Activated naive CD4-positive, alpha-beta T cell treated with anti-CD3 and anti-CD28 coated beads for 36 hours (primary cell): ENCODE measurements at regions of chr16 and their contacts with region 1.

Region 1: DNA sequence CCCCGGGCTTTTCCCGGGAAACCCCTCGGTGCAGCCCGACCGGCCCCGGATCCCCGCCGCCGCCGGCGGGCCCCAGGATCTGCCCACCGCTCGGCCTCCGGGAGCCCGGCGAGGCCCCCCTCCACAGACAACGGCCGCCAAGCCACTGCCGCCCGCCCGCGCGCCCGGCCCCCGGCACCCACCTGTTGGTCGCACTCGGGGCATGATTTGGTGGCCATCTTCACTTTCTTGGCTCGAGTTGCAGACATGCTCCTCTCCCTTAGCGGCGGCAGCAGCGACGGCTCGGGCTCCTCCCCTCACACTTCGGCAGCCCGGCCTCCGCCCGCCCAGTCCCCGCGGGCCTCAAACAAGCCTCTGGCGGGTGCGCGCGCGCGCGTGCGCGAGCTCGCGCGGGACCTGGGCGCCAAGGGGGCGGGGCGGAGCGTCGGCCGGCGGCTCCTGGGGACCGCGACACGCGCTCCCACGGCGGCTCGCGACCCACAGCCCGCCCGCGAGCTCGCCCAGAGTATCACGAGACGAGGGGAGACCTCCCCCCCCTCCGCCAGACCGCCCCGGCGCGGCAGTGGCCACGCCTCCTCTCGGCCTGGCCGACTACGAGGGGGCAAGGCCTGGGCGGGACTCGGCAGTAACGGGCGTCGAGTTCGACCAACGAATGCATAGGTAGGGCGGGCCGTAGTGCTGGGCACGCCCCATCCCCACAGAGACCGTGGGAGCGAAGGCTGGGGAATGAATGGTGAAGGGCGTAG is at the start of gene C16orf87:
- DNase-seq: peak; percentile 91
- H3K4me3 Mint-ChIP-seq: peak within 1 kb of the TSS; percentile 97
- H3K27ac Mint-ChIP-seq: peak within 1 kb of the TSS; percentile 96
- H3K4me1 Mint-ChIP-seq: peaks cover 31% of the 10 kb centered on the region
- H3K27me3 Mint-ChIP-seq: no peaks in the 10 kb centered on the region
- total RNA-seq, gene C16orf87: 13.4 to 13.5 TPM

Region 2: DNA sequence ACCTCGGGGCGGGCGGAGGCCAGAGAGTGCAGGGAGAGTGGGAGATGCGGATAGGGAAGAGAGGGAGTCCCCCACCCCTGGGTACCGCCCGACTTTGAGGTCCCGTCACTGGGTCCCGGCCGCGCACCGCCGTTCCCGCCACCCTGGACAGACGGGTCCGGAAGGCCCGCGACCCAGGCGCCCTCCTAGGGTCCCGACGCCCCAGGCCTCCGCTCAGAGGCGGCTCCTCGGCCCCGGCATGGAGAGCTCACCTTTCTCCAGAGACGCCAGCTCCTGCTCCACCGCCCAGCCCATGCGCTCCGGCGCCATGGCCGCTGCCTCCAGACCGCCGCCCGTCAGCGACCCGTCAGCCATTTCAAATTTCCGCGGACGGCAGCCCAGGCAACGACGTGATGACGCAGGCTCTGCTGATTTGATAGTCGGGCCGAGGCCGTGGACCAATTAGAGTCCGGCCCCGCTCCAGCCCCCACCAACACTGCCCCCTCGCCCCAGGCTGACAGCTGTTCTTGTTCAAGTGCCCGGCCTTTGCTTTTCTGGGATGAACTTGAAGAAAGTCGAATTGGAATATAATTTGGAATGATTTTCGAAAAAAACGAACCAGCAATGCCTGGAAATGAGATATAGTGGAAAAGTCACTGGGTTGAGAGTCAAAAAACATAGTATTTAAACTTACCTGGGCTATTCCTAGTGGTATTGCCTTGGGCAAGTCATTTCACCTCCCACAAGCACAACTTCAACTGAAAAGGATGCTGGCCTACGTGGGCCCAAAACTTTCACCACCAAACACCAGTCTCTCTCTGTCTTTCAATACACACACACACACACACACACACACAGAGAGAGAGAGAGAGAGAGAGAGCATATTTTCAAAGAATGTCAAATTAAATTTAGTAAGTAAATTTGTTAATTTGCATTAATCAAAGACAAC is 209.8 kb before region 1 on chr16 and contains the start of gene SHCBP1:
- CTCF ChIA-PET with region 1: no interaction called
- intact Hi-C with region 1: loop called (anchors 2 kb)
- DNase-seq: peak; percentile 91
- H3K4me3 Mint-ChIP-seq: peak within 1 kb of the TSS; percentile 94
- H3K27ac Mint-ChIP-seq: peak within 1 kb of the TSS; percentile 70
- H3K4me1 Mint-ChIP-seq: peaks cover 14% of the 10 kb centered on the region
- H3K27me3 Mint-ChIP-seq: peaks cover 10% of the 10 kb centered on the region
- total RNA-seq, gene SHCBP1: 41.8 to 45.0 TPM

Region 3: DNA sequence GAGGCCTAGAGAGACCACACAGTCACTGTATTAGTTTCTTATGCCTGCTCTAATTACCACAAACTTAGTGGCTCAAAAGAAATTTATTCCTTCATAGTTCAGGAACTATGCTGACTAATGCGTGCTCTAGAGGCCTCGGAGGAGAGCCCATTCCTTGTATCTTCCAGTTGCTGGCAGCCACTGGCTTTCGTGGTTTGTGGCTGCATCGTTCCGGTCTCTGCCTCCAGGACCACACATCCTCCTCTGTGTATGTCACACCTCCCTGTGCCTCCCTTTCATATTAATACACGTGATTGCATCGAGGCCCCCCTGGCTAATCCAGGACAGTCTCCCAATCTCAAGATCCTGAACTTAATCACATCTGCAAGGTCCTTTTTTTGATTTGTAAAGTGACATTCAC is 66.0 kb before region 1 on chr16:
- CTCF ChIA-PET with region 1: no interaction called
- intact Hi-C with region 1: no loop called
- DNase-seq: no peak
- H3K4me3 Mint-ChIP-seq: no peak overlapping the region
- H3K27ac Mint-ChIP-seq: no peak overlapping the region
- H3K4me1 Mint-ChIP-seq: no peaks in the 10 kb centered on the region
- H3K27me3 Mint-ChIP-seq: no peaks in the 10 kb centered on the region

Region 4: DNA sequence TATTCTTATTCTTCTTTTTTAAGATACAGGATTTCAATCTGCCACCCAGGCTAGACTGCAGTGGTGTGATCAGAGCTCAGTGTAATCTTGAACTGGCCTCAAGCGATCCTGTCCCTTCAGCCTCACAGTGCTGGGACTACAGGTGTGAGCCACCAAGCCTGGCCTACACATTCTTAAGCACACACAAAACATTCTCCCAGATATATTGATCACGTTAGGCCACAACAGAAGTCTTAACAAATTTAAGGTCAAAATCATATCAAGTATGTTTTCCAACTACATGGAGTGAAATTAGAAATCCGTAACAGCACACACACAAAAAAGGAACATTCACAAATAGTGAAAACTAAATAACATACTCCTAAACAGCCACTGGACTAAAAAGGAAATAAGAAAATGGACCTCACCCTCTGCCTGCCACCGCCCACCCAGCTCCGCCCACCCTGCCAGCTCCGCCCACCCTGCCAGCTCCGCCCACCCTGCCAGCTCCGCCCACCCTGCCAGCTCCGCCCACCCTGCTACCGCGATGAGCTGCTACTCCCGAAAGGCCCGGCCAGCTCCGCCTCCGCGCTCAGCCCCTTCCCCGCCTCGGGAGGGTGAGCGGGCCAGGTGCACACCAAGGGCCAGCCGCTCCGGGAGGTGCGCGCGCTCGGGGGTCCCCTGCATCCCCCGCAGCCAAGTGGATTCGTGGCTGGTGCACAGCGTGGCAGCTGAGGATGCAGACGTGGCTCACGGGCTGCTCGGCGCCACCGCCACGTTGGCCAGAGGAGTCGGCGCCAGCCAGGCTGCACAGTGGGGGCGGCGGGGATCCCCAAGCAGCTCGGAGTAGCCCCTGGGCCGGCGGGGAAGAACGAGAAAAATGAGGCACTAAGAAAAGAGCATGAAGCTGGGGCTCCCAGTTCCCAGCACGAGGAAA is 41.3 kb before region 1 on chr16:
- CTCF ChIA-PET with region 1: no interaction called
- intact Hi-C with region 1: loop called (anchors 1 kb)
- DNase-seq: peak; percentile 85
- H3K4me3 Mint-ChIP-seq: peak overlapping the region; percentile 74
- H3K27ac Mint-ChIP-seq: no peak overlapping the region
- H3K4me1 Mint-ChIP-seq: peaks cover 23% of the 10 kb centered on the region
- H3K27me3 Mint-ChIP-seq: no peaks in the 10 kb centered on the region

Region 5: GRCh38 chr16:46812781-46813540 is 18.1 kb before region 1 on chr16:
- CTCF ChIA-PET with region 1: interaction called, 5 read pairs
- intact Hi-C with region 1: loop called (anchors 1 kb)
- DNase-seq: peak; percentile 30
- H3K4me3 Mint-ChIP-seq: no peak overlapping the region
- H3K27ac Mint-ChIP-seq: peak overlapping the region; percentile 73
- H3K4me1 Mint-ChIP-seq: peaks cover 43% of the 10 kb centered on the region
- H3K27me3 Mint-ChIP-seq: no peaks in the 10 kb centered on the region

Region 6: GRCh38 chr16:46883690-46884512 is 52.8 kb after region 1 on chr16 and contains the start of gene GPT2:
- CTCF ChIA-PET with region 1: no interaction called
- intact Hi-C with region 1: loop called (anchors 1 kb)
- DNase-seq: peak; percentile 80
- H3K4me3 Mint-ChIP-seq: peak within 1 kb of the TSS; percentile 78
- H3K27ac Mint-ChIP-seq: peak within 1 kb of the TSS; percentile 68
- H3K4me1 Mint-ChIP-seq: peaks cover 9% of the 10 kb centered on the region
- H3K27me3 Mint-ChIP-seq: peaks cover 19% of the 10 kb centered on the region
- total RNA-seq, gene GPT2: 15.5 to 18.6 TPM

Region 7: DNA sequence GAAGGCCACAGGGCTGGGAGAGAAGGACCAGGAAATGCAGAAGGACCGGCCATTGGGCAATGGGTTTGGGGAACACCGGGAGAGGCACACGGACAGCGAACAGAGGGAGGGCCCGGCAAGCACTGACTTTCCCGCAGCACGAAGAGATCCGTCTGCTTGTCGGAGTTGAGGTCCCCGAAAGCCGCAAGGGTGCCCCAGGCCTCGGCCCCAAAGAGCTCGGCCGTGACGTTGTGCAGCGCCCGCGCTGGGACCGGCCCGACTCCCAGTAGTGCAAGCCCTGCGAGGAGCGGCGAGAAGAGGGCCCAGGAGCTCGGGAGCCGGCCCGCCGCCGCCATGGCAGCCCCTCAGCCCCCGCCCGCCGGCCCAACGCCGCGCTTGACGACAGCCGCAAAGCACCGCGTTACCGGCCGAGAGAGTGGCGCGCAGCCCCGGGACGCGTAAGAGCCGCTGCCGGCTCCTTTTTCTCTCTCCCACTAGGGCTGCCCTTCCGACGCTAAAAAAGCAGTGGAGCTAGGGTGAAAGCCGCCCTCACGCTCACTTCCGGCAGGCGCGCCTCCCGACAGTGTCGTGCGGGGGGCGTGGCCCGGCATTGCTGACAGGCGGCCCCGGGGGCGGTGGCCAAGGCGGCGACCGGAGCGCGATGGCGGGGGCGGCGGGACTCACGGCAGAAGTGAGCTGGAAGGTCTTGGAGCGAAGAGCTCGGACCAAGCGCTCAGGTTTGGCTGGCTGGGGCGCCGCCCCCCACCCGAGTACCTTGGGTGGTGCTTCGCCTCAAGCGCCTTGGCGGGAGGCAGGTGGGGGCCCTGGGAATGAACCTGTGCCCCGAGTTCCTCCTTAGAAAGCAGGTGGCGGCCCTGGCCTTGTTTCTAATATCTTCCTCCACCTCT is 629.9 kb after region 1 on chr16 and contains the starts of genes ITFG1 and PHKB:
- CTCF ChIA-PET with region 1: no interaction called
- intact Hi-C with region 1: loop called (anchors 1 kb)
- DNase-seq: peak; percentile 93
- H3K4me3 Mint-ChIP-seq: peak within 1 kb of the TSS; percentile 92
- H3K27ac Mint-ChIP-seq: peak within 1 kb of the TSS; percentile 88
- H3K4me1 Mint-ChIP-seq: peaks cover 58% of the 10 kb centered on the region
- H3K27me3 Mint-ChIP-seq: no peaks in the 10 kb centered on the region
- total RNA-seq, gene ITFG1: 17.6 to 18.3 TPM
- total RNA-seq, gene PHKB: 22.5 to 25.3 TPM

Region 8: GRCh38 chr16:48385272-48386150 is 1554.4 kb after region 1 on chr16 and contains the start of gene SIAH1:
- CTCF ChIA-PET with region 1: no interaction called
- intact Hi-C with region 1: loop called (anchors 10 kb)
- DNase-seq: peak; percentile 83
- H3K4me3 Mint-ChIP-seq: peak within 1 kb of the TSS; percentile 89
- H3K27ac Mint-ChIP-seq: peak within 1 kb of the TSS; percentile 90
- H3K4me1 Mint-ChIP-seq: peaks cover 22% of the 10 kb centered on the region
- H3K27me3 Mint-ChIP-seq: no peaks in the 10 kb centered on the region
- total RNA-seq, gene SIAH1: 13.7 to 14.6 TPM